ENCODE measurements at regions of chr14 and their contacts with region 1.

Region 1: GRCh38 chr14:75301666-75302325 is 23.2 kb downstream of the FOS start:
- DNase-seq: no peak
- H3K4me3 ChIP-seq: no peak overlapping the region
- H3K4me3 Mint-ChIP-seq: no peak overlapping the region
- H3K27ac ChIP-seq: no peak overlapping the region
- H3K27ac Mint-ChIP-seq: no peak overlapping the region
- H3K4me1 ChIP-seq: no peaks in the 10 kb centered on the region
- H3K4me1 Mint-ChIP-seq: peaks cover 3 to 6% (median 5%) of the 10 kb centered on the region in 3 donors
- H3K27me3 ChIP-seq: no peaks in the 10 kb centered on the region
- H3K27me3 Mint-ChIP-seq: peaks cover 1 to 4% of the 10 kb centered on the region in 2 donors

Region 2: GRCh38 chr14:75230140-75231045 is 71.4 kb before region 1 on chr14:
- CTCF ChIA-PET with region 1: interaction called, 43 read pairs
- POLR2A ChIA-PET with region 1: interaction called, 4 read pairs
- DNase-seq: peak; percentile 44 to 82 (median 54)
- H3K4me3 ChIP-seq: peak overlapping the region; percentile 14
- H3K4me3 Mint-ChIP-seq: peak overlapping the region; percentile 2 to 76 (median 65)
- H3K27ac ChIP-seq: peak overlapping the region; percentile 45
- H3K27ac Mint-ChIP-seq: peak overlapping the region; percentile 66 to 98 (median 86)
- H3K4me1 ChIP-seq: peaks cover 58% of the 10 kb centered on the region
- H3K4me1 Mint-ChIP-seq: peaks cover 55 to 59% (median 58%) of the 10 kb centered on the region in 3 donors
- H3K27me3 ChIP-seq: no peaks in the 10 kb centered on the region
- H3K27me3 Mint-ChIP-seq: peaks cover 0 to 1% of the 10 kb centered on the region in 2 donors

Region 3: GRCh38 chr14:75323571-75323970 is 21.8 kb after region 1 on chr14:
- CTCF ChIA-PET with region 1: no interaction called
- POLR2A ChIA-PET with region 1: no interaction called
- DNase-seq: no peak
- H3K4me3 ChIP-seq: no peak overlapping the region
- H3K4me3 Mint-ChIP-seq: no peak overlapping the region
- H3K27ac ChIP-seq: no peak overlapping the region
- H3K27ac Mint-ChIP-seq: no peak overlapping the region
- H3K4me1 ChIP-seq: no peaks in the 10 kb centered on the region
- H3K4me1 Mint-ChIP-seq: no peaks in the 10 kb centered on the region
- H3K27me3 ChIP-seq: no peaks in the 10 kb centered on the region
- H3K27me3 Mint-ChIP-seq: peaks cover 6 to 15% of the 10 kb centered on the region in 2 donors

Region 4: DNA sequence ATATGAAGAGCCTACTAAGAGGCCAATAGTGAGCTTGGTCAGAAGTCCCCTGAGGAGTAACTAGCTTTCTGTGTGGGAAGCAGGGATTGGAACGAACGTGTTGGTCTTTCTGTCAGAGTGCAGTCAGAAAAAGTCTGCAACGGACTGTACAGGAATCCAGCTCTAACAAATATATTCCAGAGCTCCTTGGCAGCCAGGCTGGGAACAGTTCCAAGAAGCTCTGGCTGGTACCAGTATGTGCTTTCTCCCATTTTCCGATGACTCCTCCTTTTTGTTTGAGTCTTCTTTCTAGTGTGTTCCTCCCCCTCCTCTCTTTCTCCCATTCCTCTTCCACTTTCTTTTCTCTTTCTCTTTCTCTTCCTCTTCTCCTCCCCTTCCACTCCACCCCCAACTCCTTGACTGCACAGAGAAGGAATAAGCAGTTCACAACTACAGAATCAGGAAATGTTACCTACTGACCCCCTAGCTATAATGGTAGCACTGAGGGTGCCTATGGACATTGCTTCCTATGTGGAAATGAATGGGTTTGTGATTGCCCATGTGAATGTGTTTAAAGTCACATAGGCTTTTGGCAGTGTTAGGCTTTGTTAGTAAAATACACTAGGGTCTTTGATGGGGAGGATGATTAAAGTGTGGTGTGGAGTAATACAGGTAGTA is 419.2 kb after region 1 on chr14:
- CTCF ChIA-PET with region 1: no interaction called
- POLR2A ChIA-PET with region 1: no interaction called
- DNase-seq: no peak
- H3K4me3 ChIP-seq: no peak overlapping the region
- H3K4me3 Mint-ChIP-seq: no peak overlapping the region
- H3K27ac ChIP-seq: no peak overlapping the region
- H3K27ac Mint-ChIP-seq: peak overlapping the region in 1 of 8 donors; percentile 91
- H3K4me1 ChIP-seq: no peaks in the 10 kb centered on the region
- H3K4me1 Mint-ChIP-seq: peaks cover 5 to 12% (median 8%) of the 10 kb centered on the region in 3 donors
- H3K27me3 ChIP-seq: no peaks in the 10 kb centered on the region
- H3K27me3 Mint-ChIP-seq: no peaks in the 10 kb centered on the region